A673 (cell line): ENCODE measurements at regions of chr16 and their contacts with region 1.

Region 1: DNA sequence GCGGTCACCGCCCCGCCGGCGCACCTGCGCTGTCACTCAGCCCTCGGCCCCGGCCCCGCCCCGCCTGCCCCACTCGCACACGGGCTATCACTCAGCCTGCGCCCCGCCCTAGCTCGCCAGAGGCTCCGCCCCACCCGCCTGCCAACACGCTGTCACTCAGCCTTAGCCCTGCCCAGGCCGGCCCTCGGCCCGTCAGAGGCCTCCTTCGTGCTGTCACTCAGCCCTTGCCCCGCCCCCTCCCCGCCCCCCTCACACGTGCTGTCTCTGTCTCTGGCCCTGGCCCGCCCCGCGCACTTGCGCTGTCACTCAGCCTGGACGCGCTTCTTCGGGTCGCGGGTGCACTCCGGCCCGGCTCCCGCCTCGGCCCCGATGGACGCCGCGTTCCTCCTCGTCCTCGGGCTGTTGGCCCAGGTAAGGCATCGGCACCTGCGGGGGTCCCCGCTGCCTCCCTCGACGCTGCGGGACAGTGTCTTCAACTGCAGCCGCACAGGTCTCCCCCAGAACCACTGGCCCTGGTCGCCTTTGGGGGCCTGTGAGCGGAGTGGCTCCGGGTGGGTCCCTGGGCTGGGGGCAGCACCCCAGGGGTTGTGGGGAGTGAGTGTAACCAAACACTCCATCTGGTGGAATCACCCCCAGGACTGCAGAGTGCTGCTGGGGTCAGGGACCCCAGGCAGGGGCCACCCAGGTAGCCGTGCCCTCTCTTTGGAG is at the start of gene CDH15:
- DNase-seq: peak; percentile 96
- H3K4me3 ChIP-seq: peak within 1 kb of the TSS; percentile 20
- H3K27ac ChIP-seq: no peak within 1 kb of the TSS
- H3K4me1 ChIP-seq: peaks cover 4% of the 10 kb centered on the region
- H3K27me3 ChIP-seq: no peaks in the 10 kb centered on the region
- CTCF ChIP-seq: no peak
- total RNA-seq, gene CDH15: 0.13 and 0.24 TPM in 2 replicates

Region 2: DNA sequence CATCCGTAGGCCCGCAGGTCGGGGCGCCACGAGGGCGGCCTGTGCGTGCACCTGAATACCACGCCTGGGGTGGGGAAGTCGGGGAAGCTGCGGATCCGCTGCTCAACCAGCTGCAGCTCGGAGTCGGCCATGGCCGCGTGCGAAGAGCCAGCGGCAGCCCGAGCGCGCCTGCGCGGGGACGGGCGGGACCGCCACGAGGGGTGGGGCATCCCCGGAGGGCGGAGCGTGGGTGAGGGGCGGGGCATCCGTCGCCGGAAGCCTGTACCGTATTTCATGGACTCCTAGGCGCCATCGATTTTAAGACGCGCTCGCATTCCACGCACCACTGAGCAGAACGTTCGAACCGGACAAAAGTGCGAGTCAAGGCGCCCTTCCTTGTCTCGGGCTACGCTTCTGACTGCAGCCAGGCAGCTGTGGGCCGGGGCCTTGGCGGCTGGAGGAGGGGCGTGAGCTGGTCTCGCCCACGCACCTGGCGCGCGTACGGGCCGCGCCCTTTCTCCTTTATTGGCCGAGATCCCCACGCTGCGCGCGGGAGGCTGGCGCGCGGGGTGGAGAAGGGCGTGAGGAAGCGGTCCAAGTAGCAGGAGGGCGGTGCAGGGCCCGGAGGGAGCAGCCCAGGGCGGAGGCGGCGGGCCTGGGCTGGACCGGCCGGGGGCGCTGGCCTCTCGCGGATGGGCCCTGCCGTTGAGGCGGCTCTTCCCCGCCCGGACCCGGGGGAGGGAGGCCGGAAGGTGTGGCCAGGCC is 359.7 kb before region 1 on chr16 and contains the start of gene APRT:
- CTCF ChIA-PET with region 1: interaction called, 3 read pairs
- POLR2A ChIA-PET with region 1: no interaction called
- intact Hi-C with region 1: loop called (anchors 5 kb)
- DNase-seq: peak; percentile 93
- H3K4me3 ChIP-seq: peak within 1 kb of the TSS; percentile 60
- H3K27ac ChIP-seq: peak within 1 kb of the TSS; percentile 94
- H3K4me1 ChIP-seq: peaks cover 7% of the 10 kb centered on the region
- H3K27me3 ChIP-seq: no peaks in the 10 kb centered on the region
- CTCF ChIP-seq: no peak
- total RNA-seq, gene APRT: 129 and 134 TPM in 2 replicates

Region 3: DNA sequence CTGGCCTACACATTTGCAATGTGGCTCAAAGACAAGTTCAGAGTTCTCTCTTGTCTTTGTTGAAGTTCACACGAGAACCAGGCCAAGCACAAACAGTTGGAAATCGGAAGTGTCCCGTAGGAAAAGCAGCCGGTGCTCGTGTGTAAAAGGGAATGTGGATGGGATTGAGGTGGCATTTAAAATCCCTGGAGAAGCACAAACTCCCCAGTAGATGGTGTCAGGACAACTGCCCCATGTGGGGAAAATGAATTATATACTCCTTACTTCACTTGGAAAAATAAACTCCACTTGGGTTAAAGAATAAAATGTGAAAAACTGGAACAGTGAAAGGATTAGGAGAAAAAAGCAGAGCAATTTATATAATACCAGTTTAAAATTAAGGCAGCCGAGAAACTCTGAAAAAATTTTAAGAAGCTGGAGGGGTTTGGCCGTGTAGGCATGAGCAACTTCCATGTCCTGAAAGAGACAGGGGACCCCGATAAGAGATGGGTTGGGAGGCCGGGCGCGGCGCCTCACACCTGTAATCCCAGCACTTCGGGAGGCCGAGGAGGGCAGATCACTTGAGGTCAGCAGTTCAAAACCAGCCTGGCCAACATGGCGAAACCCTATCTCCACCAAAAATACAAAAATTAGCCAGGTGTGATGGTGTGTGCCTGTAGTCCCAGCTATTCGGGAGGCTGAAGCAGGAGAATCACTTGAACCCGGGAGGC is 222.7 kb before region 1 on chr16:
- CTCF ChIA-PET with region 1: interaction called, 4 read pairs
- POLR2A ChIA-PET with region 1: no interaction called
- intact Hi-C with region 1: loop called (anchors 5 kb)
- DNase-seq: no peak
- H3K4me3 ChIP-seq: no peak overlapping the region
- H3K27ac ChIP-seq: no peak overlapping the region
- H3K4me1 ChIP-seq: no peaks in the 10 kb centered on the region
- H3K27me3 ChIP-seq: peaks cover 42% of the 10 kb centered on the region
- CTCF ChIP-seq: 0 out of 2 replicates have a peak, but pooled peaks have one; percentile 15